ENCODE measurements at regions of chr7 and their contacts with region 1.

Region 1: DNA sequence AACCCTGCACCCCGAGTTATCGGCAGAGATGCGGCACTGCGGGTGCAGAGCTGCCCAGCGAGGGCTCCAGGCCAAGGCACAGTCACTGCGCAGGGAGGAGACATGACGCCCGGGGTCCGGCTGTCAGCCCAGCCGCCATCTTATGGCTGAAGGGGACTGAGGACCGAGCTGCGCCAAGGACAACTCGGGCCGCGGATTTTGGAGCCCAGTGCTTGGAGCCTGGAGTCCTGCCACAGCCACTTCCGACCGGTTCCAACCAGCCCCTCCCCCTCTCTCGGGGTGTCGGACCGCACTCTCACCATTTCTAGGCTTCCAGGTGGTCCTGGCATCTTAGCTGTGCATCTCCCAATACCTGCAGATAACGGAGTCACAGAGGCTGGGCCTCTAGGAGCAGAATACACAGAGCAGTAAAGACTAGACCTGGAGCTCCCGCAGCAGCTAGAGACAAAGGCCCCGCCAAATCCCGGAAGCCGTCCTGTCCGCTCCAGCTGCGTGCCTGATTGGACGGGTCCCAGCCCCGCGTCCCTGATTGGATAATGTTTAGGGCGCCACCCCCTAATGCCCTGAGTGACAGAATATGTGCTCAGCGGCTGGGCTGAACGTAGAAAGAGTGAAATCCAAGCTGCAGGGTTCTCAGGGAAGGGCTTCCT is at the start of gene ZNF680:
- DNase-seq: peak; percentile 93
- ATAC-seq: peak; percentile 96
- H3K4me3 ChIP-seq: peak within 1 kb of the TSS; percentile 98
- H3K27ac ChIP-seq: peak within 1 kb of the TSS; percentile 67
- H3K4me1 ChIP-seq: no peaks in the 10 kb centered on the region
- H3K27me3 ChIP-seq: no peaks in the 10 kb centered on the region
- CTCF ChIP-seq: no peak
- total RNA-seq, gene ZNF680: 4.3 and 8.8 TPM in 2 replicates

Region 2: GRCh38 chr7:64313740-64314491 is 248.8 kb before region 1 on chr7 and contains the start of gene ZNF736:
- CTCF ChIA-PET with region 1: no interaction called
- POLR2A ChIA-PET with region 1: no interaction called
- intact Hi-C with region 1: loop called (anchors 2 kb)
- DNase-seq: peak; percentile 87
- ATAC-seq: peak; percentile 100
- H3K4me3 ChIP-seq: peak within 1 kb of the TSS; percentile 82
- H3K27ac ChIP-seq: peak within 1 kb of the TSS; percentile 37
- H3K4me1 ChIP-seq: 0 out of 2 replicates have a peak, but pooled peaks cover 5% of the 10 kb centered on the region
- H3K27me3 ChIP-seq: no peaks in the 10 kb centered on the region
- CTCF ChIP-seq: no peak
- total RNA-seq, gene ZNF736: 2.7 and 10.7 TPM in 2 replicates

Region 3: DNA sequence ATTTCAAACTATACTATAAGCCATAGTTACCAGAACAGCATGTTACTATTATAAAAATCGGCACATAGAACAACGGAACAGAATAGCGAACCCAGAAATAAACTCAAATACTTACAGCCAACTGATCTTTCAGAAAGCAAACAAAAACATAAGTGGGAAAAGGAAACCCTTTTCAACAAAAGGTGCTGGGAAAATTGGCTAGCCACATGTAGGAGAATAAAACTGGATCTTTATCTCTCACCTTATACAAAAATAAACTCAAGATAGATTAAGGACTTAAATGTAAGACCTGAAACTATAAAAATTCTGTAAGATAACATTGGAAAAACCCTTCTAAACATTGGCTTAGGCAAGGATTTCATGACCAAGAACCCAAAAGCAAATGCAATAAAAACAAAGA is 29.0 kb before region 1 on chr7:
- CTCF ChIA-PET with region 1: no interaction called
- POLR2A ChIA-PET with region 1: no interaction called
- intact Hi-C with region 1: loop called (anchors 1 kb)
- DNase-seq: no peak
- ATAC-seq: no peak
- H3K4me3 ChIP-seq: no peak overlapping the region
- H3K27ac ChIP-seq: peak overlapping the region; percentile 46
- H3K4me1 ChIP-seq: no peaks in the 10 kb centered on the region
- H3K27me3 ChIP-seq: no peaks in the 10 kb centered on the region
- CTCF ChIP-seq: no peak

Region 4: GRCh38 chr7:64551375-64552142 is 11.2 kb before region 1 on chr7:
- CTCF ChIA-PET with region 1: no interaction called
- POLR2A ChIA-PET with region 1: no interaction called
- intact Hi-C with region 1: no loop called
- DNase-seq: no peak
- ATAC-seq: no peak
- H3K4me3 ChIP-seq: no peak overlapping the region
- H3K27ac ChIP-seq: no peak overlapping the region
- H3K4me1 ChIP-seq: no peaks in the 10 kb centered on the region
- H3K27me3 ChIP-seq: no peaks in the 10 kb centered on the region
- CTCF ChIP-seq: no peak

Region 5: DNA sequence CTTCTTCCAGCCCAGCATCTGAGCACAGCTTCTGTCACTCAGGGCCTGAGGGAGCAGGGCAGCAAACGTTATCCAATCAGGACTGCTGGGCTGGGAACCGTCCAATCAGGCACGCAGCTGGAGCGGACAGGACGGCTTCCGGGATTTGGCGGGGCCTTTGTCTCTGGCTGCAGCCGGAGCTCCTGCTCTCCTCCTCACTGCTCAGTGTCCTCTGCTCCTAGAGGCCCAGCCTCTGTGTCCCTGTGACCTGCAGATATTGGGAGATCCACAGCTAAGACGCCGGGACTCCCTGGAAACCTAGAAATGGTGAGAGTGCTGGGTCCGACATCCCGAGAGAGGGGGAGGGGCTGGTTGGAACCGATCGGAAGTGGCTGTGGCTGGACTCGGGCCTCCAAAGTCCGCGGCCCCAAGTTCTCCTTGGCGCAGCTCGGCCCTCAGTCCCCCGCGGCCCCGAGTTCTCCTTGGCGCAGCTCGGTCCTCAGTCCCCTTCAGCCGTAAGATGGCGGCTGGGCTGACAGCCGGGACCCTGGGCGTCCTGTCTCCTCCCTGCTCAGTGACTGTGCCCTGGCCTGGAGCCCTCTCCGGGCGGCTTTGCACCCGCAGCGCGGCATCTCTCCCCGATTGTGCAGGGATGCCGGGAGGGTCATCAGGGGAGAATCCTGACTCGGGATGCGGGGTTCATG is 103.4 kb after region 1 on chr7 and contains the start of gene ZNF107:
- CTCF ChIA-PET with region 1: no interaction called
- POLR2A ChIA-PET with region 1: no interaction called
- intact Hi-C with region 1: loop called (anchors 10 kb)
- DNase-seq: peak; percentile 92
- ATAC-seq: peak; percentile 99
- H3K4me3 ChIP-seq: peak within 1 kb of the TSS; percentile 99
- H3K27ac ChIP-seq: peak within 1 kb of the TSS; percentile 42
- H3K4me1 ChIP-seq: peaks cover 9% of the 10 kb centered on the region; the same call in 1 of the 2 replicates
- H3K27me3 ChIP-seq: no peaks in the 10 kb centered on the region
- CTCF ChIP-seq: no peak
- total RNA-seq, gene ZNF107: 4.3 and 4.8 TPM in 2 replicates

Region 6: GRCh38 chr7:64794171-64794844 is 231.6 kb after region 1 on chr7 and contains the start of gene ZNF138:
- CTCF ChIA-PET with region 1: no interaction called
- POLR2A ChIA-PET with region 1: no interaction called
- intact Hi-C with region 1: loop called (anchors 1 kb)
- DNase-seq: peak; percentile 95
- ATAC-seq: peak; percentile 100
- H3K4me3 ChIP-seq: peak within 1 kb of the TSS; percentile 98
- H3K27ac ChIP-seq: peak within 1 kb of the TSS; percentile 50
- H3K4me1 ChIP-seq: 0 out of 2 replicates have a peak, but pooled peaks cover 10% of the 10 kb centered on the region
- H3K27me3 ChIP-seq: no peaks in the 10 kb centered on the region
- CTCF ChIP-seq: no peak
- total RNA-seq, gene ZNF138: 4.1 and 10.9 TPM in 2 replicates

Region 7: DNA sequence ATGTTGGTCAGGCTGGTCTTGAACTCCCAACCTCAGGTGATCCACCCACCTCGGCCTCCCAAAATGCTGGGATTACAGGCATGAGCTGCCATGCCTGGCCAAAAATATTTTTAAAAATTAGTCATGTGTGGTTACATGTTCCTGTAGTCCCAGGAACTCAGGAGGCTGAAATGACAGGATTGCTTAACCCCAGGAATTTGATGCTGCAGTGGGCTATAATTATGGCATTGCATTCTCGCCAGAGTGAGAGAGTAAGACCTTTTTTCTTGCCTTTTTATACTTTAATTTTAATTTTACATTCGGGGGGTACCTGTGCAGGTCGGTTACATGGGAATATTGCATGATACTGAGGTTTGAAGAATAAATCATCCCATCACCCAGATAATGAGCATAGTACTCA is 724.3 kb after region 1 on chr7:
- CTCF ChIA-PET with region 1: no interaction called
- POLR2A ChIA-PET with region 1: no interaction called
- intact Hi-C with region 1: no loop called
- DNase-seq: no peak
- ATAC-seq: no peak
- H3K4me3 ChIP-seq: no peak overlapping the region
- H3K27ac ChIP-seq: no peak overlapping the region
- H3K4me1 ChIP-seq: no peaks in the 10 kb centered on the region
- H3K27me3 ChIP-seq: no peaks in the 10 kb centered on the region
- CTCF ChIP-seq: no peak